Naive thymus-derived CD4-positive, alpha-beta T cell (primary cell): ENCODE measurements at regions of chr6 and their contacts with region 1.

Region 1: DNA sequence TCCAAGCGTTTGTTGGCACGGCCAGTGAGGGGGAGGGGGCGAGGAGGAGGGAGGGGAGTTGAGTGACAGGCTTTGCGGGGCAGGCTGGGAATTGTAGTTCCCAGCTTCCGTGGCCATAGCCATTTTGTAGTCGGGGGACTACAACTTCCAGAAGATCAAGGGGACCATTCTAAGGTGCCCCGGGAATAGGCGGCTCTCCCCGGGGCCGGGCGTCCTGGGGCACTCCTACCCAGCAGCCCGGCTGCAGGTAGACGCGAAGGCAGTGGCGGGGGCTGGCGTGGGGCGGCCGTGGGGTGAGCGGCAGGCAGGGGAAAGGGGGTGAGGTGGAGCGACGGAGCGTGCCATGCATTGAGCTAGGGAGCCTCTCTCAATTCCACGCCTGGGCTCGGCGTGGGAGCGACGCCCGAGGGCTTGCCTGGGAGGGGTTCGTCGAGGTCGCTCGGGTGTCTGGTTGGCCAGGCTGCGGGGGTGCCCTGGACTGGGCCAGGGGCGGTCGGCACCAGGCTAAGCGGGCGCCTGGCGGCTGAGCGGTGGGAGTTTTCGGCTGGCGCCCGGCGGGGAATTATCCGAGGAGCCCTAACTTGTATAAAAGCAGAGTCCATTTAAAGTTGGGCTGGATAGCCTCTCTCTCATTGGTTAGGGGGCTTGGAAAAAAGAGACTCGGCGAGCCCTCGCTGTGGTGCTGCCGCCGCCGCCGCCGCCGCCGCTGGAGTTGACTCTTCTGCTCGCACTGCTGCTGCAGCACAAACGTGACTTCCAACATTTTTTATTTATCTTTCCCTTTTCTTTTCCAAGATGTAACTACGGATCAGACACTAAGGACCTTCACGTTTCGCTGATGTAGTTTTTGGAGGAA is at the start of gene JARID2:
- DNase-seq: peak; percentile 86 to 97 (median 94)
- ATAC-seq: peak; percentile 66
- H3K4me3 ChIP-seq: peak within 1 kb of the TSS; percentile 93
- H3K4me3 Mint-ChIP-seq: peak within 1 kb of the TSS; percentile 94 to 100 (median 99)
- H3K27ac ChIP-seq: peak within 1 kb of the TSS; percentile 93
- H3K27ac Mint-ChIP-seq: peak within 1 kb of the TSS; percentile 94 to 99 (median 97)
- H3K4me1 ChIP-seq: peaks cover 8 to 10% of the 10 kb centered on the region in 2 donors
- H3K4me1 Mint-ChIP-seq: peaks cover 13 to 39% (median 26%) of the 10 kb centered on the region in 7 donors
- H3K27me3 ChIP-seq: no peaks in the 10 kb centered on the region
- H3K27me3 Mint-ChIP-seq: peaks cover 0 to 2% (median 0%) of the 10 kb centered on the region in 5 donors
- total RNA-seq, gene JARID2: 23.4 to 39.6 (median 29.9) TPM

Region 2: GRCh38 chr6:13814176-13814937 is 1431.2 kb before region 1 on chr6 and contains the start of gene MCUR1:
- CTCF ChIA-PET with region 1: no interaction called
- POLR2A ChIA-PET with region 1: no interaction called
- intact Hi-C with region 1: loop called (anchors 1 to 10 kb)
- DNase-seq: peak; percentile 69 to 87 (median 76)
- ATAC-seq: peak; percentile 91
- H3K4me3 ChIP-seq: peak within 1 kb of the TSS; percentile 71
- H3K4me3 Mint-ChIP-seq: peak within 1 kb of the TSS; percentile 87 to 92 (median 90)
- H3K27ac ChIP-seq: peak within 1 kb of the TSS; percentile 82
- H3K27ac Mint-ChIP-seq: peak within 1 kb of the TSS; percentile 60 to 93 (median 85)
- H3K4me1 ChIP-seq: peaks cover 0 to 13% of the 10 kb centered on the region in 2 donors
- H3K4me1 Mint-ChIP-seq: peaks cover 17 to 40% (median 38%) of the 10 kb centered on the region in 7 donors
- H3K27me3 ChIP-seq: no peaks in the 10 kb centered on the region
- H3K27me3 Mint-ChIP-seq: peaks cover 0 to 25% (median 0%) of the 10 kb centered on the region in 5 donors
- total RNA-seq, gene MCUR1: 5.7 to 20.6 (median 10.0) TPM

Region 3: DNA sequence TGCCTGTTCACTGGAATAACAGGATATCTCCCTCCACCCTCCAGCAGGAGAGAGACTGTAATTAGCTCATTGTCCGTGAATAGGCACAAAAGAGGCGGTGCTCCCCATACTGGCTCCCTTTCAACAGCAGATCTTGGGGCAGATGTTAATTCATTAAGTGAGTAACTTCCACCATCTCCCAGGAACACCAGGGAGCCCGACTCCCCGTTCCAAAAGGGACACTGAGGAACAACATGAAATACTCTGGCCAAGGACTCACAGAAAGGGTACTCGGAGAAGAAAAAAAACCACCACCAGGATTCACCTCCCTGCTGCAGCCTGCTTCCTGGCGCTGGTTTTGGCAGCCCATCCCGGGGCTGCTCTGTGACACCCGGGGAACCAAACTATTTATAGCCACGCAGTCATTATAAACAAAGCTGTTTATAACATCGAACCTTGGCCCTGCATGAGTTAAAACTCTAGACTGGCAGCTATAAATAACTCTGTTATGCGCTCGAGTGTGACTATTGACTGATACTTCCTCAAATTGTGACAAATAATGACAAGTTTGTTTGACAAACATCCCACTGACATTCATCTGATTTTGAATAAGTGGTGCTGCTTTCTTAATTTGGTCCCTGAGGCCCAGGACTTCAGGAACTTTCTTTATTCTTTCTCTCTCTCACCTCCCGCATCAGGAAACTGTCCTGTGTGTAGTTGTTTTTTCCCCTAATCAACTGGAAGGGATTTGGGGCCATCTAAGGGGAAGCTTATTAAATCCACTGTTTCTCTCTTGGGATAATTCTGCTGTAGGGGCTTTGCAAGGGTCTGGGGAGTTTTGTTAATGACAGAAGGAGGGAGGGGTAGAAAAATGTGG is 606.5 kb before region 1 on chr6:
- CTCF ChIA-PET with region 1: no interaction called
- POLR2A ChIA-PET with region 1: no interaction called
- intact Hi-C with region 1: loop called in 1 of 2 experiments (anchors 5 kb)
- DNase-seq: no peak
- ATAC-seq: peak; percentile 54
- H3K4me3 ChIP-seq: no peak overlapping the region
- H3K4me3 Mint-ChIP-seq: peak overlapping the region in 1 of 10 donors; percentile 14
- H3K27ac ChIP-seq: no peak overlapping the region
- H3K27ac Mint-ChIP-seq: peak overlapping the region in 2 of 9 donors; percentile 25 to 46
- H3K4me1 ChIP-seq: peaks cover 27 to 29% of the 10 kb centered on the region in 2 donors
- H3K4me1 Mint-ChIP-seq: peaks cover 41 to 63% (median 52%) of the 10 kb centered on the region in 7 donors
- H3K27me3 ChIP-seq: no peaks in the 10 kb centered on the region
- H3K27me3 Mint-ChIP-seq: peaks cover 0 to 25% (median 4%) of the 10 kb centered on the region in 5 donors

Region 4: DNA sequence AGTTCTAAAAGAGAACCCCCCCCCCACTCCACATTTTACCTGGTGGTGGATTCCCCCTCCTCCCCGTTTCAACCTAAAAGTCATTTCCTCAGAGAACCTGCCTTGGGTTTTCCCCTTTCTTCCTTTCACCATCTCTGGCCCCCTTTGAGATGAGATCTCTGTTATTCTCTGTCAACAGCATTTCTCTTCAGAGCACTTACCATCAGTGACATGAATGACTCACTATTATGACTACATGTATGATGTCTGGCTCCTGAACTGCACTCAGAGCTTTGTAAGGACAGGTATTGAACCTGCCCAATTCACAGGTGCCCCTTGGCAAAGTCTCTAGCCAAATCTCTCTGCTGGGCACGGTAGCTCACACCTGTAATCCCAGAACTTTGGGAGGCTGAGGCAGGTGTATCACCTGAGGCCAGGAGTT is 61.1 kb before region 1 on chr6:
- CTCF ChIA-PET with region 1: no interaction called
- POLR2A ChIA-PET with region 1: no interaction called
- intact Hi-C with region 1: loop called (anchors 2 kb)
- DNase-seq: peak in 7 of 9 donors; percentile 4 to 58 (median 22)
- ATAC-seq: peak; percentile 85
- H3K4me3 ChIP-seq: no peak overlapping the region
- H3K4me3 Mint-ChIP-seq: peak overlapping the region in 7 of 10 donors; percentile 2 to 40 (median 18)
- H3K27ac ChIP-seq: no peak overlapping the region
- H3K27ac Mint-ChIP-seq: peak overlapping the region in 5 of 9 donors; percentile 43 to 95 (median 78)
- H3K4me1 ChIP-seq: no peaks in the 10 kb centered on the region
- H3K4me1 Mint-ChIP-seq: peaks cover 6 to 16% (median 12%) of the 10 kb centered on the region in 7 donors
- H3K27me3 ChIP-seq: no peaks in the 10 kb centered on the region
- H3K27me3 Mint-ChIP-seq: no peaks in the 10 kb centered on the region

Region 5: GRCh38 chr6:15327271-15327670 is 81.7 kb after region 1 on chr6:
- CTCF ChIA-PET with region 1: interaction called, 4 read pairs
- POLR2A ChIA-PET with region 1: no interaction called
- intact Hi-C with region 1: loop called in 1 of 2 experiments (anchors 1 kb)
- DNase-seq: peak in 7 of 9 donors; percentile 26 to 59 (median 48)
- ATAC-seq: peak; percentile 74
- H3K4me3 ChIP-seq: no peak overlapping the region
- H3K4me3 Mint-ChIP-seq: peak overlapping the region in 5 of 10 donors; percentile 12 to 48 (median 45)
- H3K27ac ChIP-seq: no peak overlapping the region
- H3K27ac Mint-ChIP-seq: peak overlapping the region in 7 of 9 donors; percentile 44 to 90 (median 67)
- H3K4me1 ChIP-seq: peaks cover 26 to 54% of the 10 kb centered on the region in 2 donors
- H3K4me1 Mint-ChIP-seq: peaks cover 42 to 94% (median 81%) of the 10 kb centered on the region in 7 donors
- H3K27me3 ChIP-seq: no peaks in the 10 kb centered on the region
- H3K27me3 Mint-ChIP-seq: no peaks in the 10 kb centered on the region

Region 6: DNA sequence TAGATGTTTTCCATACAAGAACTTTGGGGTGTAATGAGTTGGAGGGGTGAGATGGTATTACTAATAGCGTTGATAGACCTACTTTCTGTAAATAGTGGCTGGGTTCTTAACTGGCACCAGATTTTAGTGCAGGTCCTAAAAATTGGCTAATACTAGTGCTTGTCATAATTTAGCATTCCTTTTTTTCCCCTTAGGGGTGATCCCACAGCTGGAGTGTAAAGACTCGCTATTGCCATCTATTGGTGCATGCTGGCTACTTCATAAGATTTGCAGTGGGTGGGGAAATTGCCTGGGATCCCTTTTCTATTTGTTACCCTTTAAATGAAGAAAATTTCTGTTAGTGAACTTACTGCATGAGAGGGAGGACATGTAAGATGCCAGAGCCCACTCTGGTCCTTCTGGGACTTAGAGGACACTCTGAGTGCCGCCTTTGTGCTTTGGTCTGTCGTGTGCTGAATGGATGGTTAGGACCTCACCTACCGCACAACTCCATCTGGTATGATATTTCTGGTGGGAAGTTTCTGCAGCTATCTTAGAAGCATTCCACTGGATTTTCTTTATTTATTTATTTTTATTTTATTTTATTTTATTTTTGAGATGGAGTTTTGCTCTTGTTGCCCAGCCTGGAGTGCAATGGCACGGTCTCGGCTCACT is 195.8 kb after region 1 on chr6:
- CTCF ChIA-PET with region 1: interaction called, 4 read pairs
- POLR2A ChIA-PET with region 1: interaction called, 5 read pairs
- intact Hi-C with region 1: loop called (anchors 1 to 2 kb)
- DNase-seq: peak in 5 of 9 donors; percentile 36 to 55 (median 41)
- ATAC-seq: peak; percentile 74
- H3K4me3 ChIP-seq: no peak overlapping the region
- H3K4me3 Mint-ChIP-seq: peak overlapping the region in 1 of 10 donors; percentile 42
- H3K27ac ChIP-seq: no peak overlapping the region
- H3K27ac Mint-ChIP-seq: peak overlapping the region in 1 of 9 donors; percentile 21
- H3K4me1 ChIP-seq: peaks cover 14 to 20% of the 10 kb centered on the region in 2 donors
- H3K4me1 Mint-ChIP-seq: peaks cover 54 to 88% (median 74%) of the 10 kb centered on the region in 7 donors
- H3K27me3 ChIP-seq: no peaks in the 10 kb centered on the region
- H3K27me3 Mint-ChIP-seq: no peaks in the 10 kb centered on the region

Region 7: DNA sequence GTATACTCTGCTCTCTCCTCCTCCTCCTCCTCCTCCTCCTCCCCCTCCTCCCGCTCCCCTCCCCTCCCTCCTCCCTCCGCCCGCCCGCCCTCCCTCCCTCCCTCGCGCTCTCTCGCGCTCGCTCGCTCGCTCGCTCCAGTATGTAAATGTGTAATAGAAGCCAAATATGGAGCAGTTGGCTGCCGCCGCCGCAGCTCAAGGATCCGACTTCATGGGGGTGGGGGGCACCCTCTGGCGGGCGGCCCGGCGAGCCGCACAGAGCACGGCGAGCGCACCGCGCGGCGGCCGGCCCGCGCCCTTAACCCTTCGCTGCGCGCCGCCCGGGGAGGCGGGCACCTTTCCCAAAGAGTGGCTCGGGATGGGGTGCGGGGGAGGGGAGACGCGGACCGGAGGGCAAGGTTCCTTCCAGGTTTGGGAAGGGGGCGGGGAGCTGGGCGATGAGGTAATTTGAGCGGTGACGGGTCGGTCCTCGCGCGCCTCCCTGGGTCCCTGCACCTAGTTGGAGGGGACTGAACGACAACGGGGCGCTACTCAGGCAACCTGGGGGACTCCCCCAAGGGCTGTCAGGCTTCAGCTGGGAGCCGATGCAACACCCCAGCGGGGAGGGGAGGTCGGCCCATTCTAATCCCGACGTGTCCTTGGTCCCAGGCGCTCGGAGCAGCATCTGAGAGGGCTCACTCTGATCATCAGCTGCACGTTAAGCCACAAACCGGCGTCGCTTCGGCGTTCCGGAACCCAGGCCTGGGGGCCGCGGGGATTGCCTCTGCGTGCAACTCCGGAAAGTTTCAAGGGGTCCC is 1516.1 kb after region 1 on chr6:
- CTCF ChIA-PET with region 1: no interaction called
- POLR2A ChIA-PET with region 1: no interaction called
- intact Hi-C with region 1: loop called (anchors 2 to 5 kb)
- DNase-seq: peak; percentile 68 to 92 (median 81)
- ATAC-seq: peak; percentile 72
- H3K4me3 ChIP-seq: peak overlapping the region; percentile 91
- H3K4me3 Mint-ChIP-seq: peak overlapping the region; percentile 87 to 100 (median 98)
- H3K27ac ChIP-seq: peak overlapping the region; percentile 95
- H3K27ac Mint-ChIP-seq: peak overlapping the region; percentile 95 to 100 (median 97)
- H3K4me1 ChIP-seq: peaks cover 7 to 34% of the 10 kb centered on the region in 2 donors
- H3K4me1 Mint-ChIP-seq: peaks cover 18 to 61% (median 42%) of the 10 kb centered on the region in 7 donors
- H3K27me3 ChIP-seq: no peaks in the 10 kb centered on the region
- H3K27me3 Mint-ChIP-seq: peaks cover 0 to 4% (median 0%) of the 10 kb centered on the region in 5 donors